ENCODE measurements at regions of chr5 and their contacts with region 1.

Region 1: DNA sequence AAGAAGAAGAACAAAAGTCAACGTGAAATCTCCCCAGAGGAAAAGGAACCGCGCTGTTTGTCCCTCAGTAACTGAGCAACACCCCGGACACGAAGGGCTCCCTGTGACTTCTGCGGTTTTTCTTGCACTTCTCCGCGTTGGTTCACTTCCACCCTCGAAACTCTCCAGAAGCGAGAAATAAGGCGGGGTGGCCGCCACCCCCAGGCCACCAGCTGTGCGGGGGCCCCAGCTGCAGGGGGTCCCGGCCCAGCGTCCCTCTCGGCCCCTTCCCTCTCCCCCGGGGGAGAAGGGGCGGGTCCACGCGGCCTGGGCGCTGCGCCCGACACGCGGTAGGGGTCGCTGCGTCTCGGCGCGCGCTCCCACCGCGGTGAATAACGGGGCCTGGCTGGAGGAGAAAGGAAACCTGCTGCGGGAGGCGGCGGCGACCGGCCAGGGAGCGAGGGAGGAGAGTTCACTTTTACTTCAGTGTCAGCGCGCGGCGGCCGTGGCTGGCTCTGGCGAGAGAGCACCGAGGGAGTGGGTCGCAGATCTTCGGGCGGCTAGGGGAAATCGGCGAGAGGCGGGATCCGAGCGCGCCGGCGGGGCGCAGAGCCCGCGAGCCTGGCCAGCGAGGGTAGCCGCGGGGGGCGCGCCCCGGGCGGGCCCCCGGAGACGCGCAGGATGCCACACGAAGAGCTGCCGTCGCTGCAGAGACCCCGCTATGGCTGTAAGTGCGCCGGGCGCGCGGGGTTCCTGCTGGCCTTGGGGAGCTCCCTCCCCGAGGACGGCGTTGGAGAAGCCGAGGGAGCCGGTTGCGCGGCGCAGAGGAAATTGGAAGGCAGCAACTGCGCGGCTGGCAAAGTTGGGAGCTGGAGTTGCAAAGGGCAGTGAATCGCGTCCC is at the start of gene IQGAP2:
- DNase-seq: peak; percentile 89 to 91 (median 90)
- ATAC-seq: peak; percentile 94
- H3K4me3 ChIP-seq: peak within 1 kb of the TSS; percentile 72
- H3K27ac ChIP-seq: peak within 1 kb of the TSS; percentile 91
- H3K4me1 ChIP-seq: peaks cover 25 to 31% of the 10 kb centered on the region in 2 experiments
- H3K27me3 ChIP-seq: no peaks in the 10 kb centered on the region; a peak in 1 of 5 replicates
- CTCF ChIP-seq: peak; percentile 75 to 87 (median 83)
- EP300 ChIP-seq: no peak
- POLR2A ChIP-seq: peak; percentile 60; the same call in 1 of the 2 replicates
- RAD21 ChIP-seq: peak; percentile 79 to 81
- polyA plus RNA-seq, gene IQGAP2: 8.7 to 8.8 TPM

Region 2: GRCh38 chr5:76319673-76320072 is 83.5 kb before region 1 on chr5:
- CTCF ChIA-PET with region 1: no interaction called
- POLR2A ChIA-PET with region 1: no interaction called
- in situ Hi-C with region 1: no loop called
- intact Hi-C with region 1: loop called (anchors 5 kb)
- DNase-seq: peak; percentile 59 to 84 (median 72)
- ATAC-seq: peak; percentile 93
- H3K4me3 ChIP-seq: no peak overlapping the region
- H3K27ac ChIP-seq: peak overlapping the region; percentile 69
- H3K4me1 ChIP-seq: peaks cover 11 to 21% of the 10 kb centered on the region in 2 experiments; a peak in 4 of 5 replicates
- H3K27me3 ChIP-seq: no peaks in the 10 kb centered on the region
- CTCF ChIP-seq: no peak
- EP300 ChIP-seq: peak; percentile 96
- POLR2A ChIP-seq: no peak
- RAD21 ChIP-seq: 0 out of 4 replicates have a peak, but pooled peaks of 1 of the 2 experiments have one; percentile 9

Region 3: GRCh38 chr5:76337953-76338451 is 65.1 kb before region 1 on chr5:
- CTCF ChIA-PET with region 1: interaction called, 3 read pairs
- POLR2A ChIA-PET with region 1: no interaction called
- in situ Hi-C with region 1: no loop called
- intact Hi-C with region 1: loop called (anchors 2 kb)
- DNase-seq: peak; percentile 61 to 79 (median 68)
- ATAC-seq: peak; percentile 90
- H3K4me3 ChIP-seq: no peak overlapping the region
- H3K27ac ChIP-seq: no peak overlapping the region
- H3K4me1 ChIP-seq: peaks cover 2 to 9% of the 10 kb centered on the region in 2 experiments; a peak in 3 of 5 replicates
- H3K27me3 ChIP-seq: no peaks in the 10 kb centered on the region
- CTCF ChIP-seq: peak; percentile 68 to 72 (median 68)
- EP300 ChIP-seq: 0 out of 2 replicates have a peak, but pooled peaks have one; percentile 7
- POLR2A ChIP-seq: no peak
- RAD21 ChIP-seq: peak; percentile 65 to 79

Region 4: DNA sequence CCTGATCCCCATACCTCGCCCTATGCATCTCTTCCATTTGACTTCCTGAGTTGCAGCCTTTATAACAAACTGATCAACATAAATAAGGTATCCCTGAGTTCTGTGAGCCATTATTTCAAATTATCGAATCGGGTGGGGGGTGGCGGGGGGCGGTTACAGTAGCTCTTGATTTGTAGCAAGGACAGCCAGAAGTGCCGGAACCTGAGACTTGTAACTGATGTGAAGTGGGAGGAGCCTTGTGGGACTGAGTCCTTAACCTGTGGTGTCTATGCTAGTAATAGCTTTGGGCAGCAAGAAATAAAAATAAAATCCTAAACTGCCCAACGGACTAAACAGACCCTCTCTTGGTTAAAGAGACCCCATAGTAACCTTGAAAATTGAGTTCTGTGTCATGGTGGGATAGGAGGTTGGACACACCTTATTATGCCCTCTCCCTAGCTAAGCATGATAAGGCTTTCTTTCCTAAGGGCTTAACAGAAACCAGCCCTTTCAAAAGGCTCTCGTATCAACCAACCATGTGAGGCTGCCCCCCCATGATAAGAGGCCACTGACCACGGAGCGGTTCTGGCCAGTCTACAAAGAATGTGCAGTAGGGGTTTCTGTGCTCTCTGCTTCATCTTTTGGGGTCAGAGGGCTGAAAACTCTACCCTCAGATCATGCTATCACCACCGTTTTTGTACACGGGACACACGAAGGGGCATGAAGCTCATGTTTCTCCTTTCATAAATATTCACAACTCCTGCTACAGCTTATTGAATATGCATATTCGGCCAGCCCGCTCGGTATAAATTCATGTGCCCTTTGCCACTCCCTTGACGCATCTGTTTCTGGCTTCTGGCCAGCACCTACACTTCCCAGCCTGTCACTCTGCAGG is 39.5 kb before region 1 on chr5:
- CTCF ChIA-PET with region 1: no interaction called
- POLR2A ChIA-PET with region 1: no interaction called
- in situ Hi-C with region 1: no loop called
- intact Hi-C with region 1: loop called (anchors 5 kb)
- DNase-seq: peak; percentile 73 to 93 (median 80)
- ATAC-seq: peak; percentile 96
- H3K4me3 ChIP-seq: peak overlapping the region; percentile 22
- H3K27ac ChIP-seq: peak overlapping the region; percentile 98
- H3K4me1 ChIP-seq: peaks cover 6 to 31% of the 10 kb centered on the region in 2 experiments; a peak in 4 of 5 replicates
- H3K27me3 ChIP-seq: no peaks in the 10 kb centered on the region
- CTCF ChIP-seq: no peak
- EP300 ChIP-seq: peak; percentile 85; the same call in 1 of the 2 replicates
- POLR2A ChIP-seq: peak; percentile 45; the same call in 1 of the 2 replicates
- RAD21 ChIP-seq: 0 out of 4 replicates have a peak, but pooled peaks of 1 of the 2 experiments have one; percentile 7

Region 5: GRCh38 chr5:76544268-76544926 is 141.3 kb after region 1 on chr5:
- CTCF ChIA-PET with region 1: interaction called, 5 read pairs
- POLR2A ChIA-PET with region 1: no interaction called
- in situ Hi-C with region 1: loop called (anchors 5 kb)
- intact Hi-C with region 1: loop called (anchors 1 kb)
- DNase-seq: peak; percentile 26 to 64 (median 40)
- ATAC-seq: peak; percentile 77
- H3K4me3 ChIP-seq: no peak overlapping the region
- H3K27ac ChIP-seq: no peak overlapping the region
- H3K4me1 ChIP-seq: peaks cover 7 to 47% of the 10 kb centered on the region in 2 experiments; a peak in 4 of 5 replicates
- H3K27me3 ChIP-seq: no peaks in the 10 kb centered on the region
- CTCF ChIP-seq: peak; percentile 66 to 71 (median 71)
- EP300 ChIP-seq: no peak
- POLR2A ChIP-seq: no peak
- RAD21 ChIP-seq: peak; percentile 80 to 83

Region 6: GRCh38 chr5:76582230-76583162 is 179.4 kb after region 1 on chr5:
- CTCF ChIA-PET with region 1: interaction called, 19 read pairs
- POLR2A ChIA-PET with region 1: interaction called, 3 read pairs
- in situ Hi-C with region 1: no loop called
- intact Hi-C with region 1: loop called (anchors 2 kb)
- DNase-seq: peak in 1 of 4 experiments; percentile 51
- ATAC-seq: peak; percentile 64
- H3K4me3 ChIP-seq: no peak overlapping the region
- H3K27ac ChIP-seq: no peak overlapping the region
- H3K4me1 ChIP-seq: peaks cover 3 to 15% of the 10 kb centered on the region in 2 experiments; a peak in 4 of 5 replicates
- H3K27me3 ChIP-seq: no peaks in the 10 kb centered on the region
- CTCF ChIP-seq: no peak
- EP300 ChIP-seq: no peak
- POLR2A ChIP-seq: no peak
- RAD21 ChIP-seq: no peak

Region 7: DNA sequence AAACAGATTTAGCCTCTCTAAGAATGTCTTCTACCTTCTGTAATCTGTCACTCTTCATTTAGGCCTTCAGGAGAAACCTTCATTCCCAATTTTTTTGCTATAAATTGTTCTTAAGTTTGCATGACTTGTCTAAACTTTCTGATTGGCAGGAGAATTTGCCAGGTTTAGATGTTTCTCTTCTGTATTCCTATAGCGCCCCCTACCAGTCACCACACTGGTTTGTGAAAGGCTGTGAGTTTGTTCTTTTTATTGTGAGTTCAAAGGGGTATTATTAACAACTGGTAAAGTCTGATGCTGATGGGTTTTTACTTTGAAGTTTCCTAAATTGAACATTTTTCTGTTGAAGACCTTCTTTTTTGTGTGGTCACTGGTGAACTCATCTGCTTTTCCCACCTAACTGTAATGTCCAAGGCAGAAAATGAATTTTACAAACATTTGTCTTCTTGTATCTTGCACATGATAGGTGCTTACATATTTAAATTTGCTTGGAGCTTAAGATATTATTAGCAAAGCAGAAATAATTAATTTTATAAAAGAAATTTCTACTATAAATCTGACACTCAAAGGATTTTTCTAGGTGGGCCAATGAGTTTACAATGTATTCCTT is 238.5 kb after region 1 on chr5:
- CTCF ChIA-PET with region 1: no interaction called
- POLR2A ChIA-PET with region 1: no interaction called
- in situ Hi-C with region 1: no loop called
- intact Hi-C with region 1: loop called (anchors 1 kb)
- DNase-seq: peak; percentile 61 to 81 (median 66)
- ATAC-seq: peak; percentile 88
- H3K4me3 ChIP-seq: no peak overlapping the region
- H3K27ac ChIP-seq: no peak overlapping the region
- H3K4me1 ChIP-seq: no peaks in the 10 kb centered on the region
- H3K27me3 ChIP-seq: no peaks in the 10 kb centered on the region
- CTCF ChIP-seq: peak; percentile 83 to 92 (median 83)
- EP300 ChIP-seq: no peak
- POLR2A ChIP-seq: no peak
- RAD21 ChIP-seq: peak; percentile 82 to 93